ENCODE measurements at regions of chr20 and their contacts with region 1.

Region 1: GRCh38 chr20:49631061-49631788 is 63.3 kb upstream of the PTGIS start:
- DNase-seq: no peak
- H3K4me3 ChIP-seq: no peak overlapping the region
- H3K27ac ChIP-seq: peak overlapping the region; percentile 73 to 82
- H3K4me1 ChIP-seq: peaks cover 0 to 6% of the 10 kb centered on the region in 2 donors
- H3K27me3 ChIP-seq: no peaks in the 10 kb centered on the region
- CTCF ChIP-seq: no peak
- POLR2A ChIP-seq: no peak

Region 2: DNA sequence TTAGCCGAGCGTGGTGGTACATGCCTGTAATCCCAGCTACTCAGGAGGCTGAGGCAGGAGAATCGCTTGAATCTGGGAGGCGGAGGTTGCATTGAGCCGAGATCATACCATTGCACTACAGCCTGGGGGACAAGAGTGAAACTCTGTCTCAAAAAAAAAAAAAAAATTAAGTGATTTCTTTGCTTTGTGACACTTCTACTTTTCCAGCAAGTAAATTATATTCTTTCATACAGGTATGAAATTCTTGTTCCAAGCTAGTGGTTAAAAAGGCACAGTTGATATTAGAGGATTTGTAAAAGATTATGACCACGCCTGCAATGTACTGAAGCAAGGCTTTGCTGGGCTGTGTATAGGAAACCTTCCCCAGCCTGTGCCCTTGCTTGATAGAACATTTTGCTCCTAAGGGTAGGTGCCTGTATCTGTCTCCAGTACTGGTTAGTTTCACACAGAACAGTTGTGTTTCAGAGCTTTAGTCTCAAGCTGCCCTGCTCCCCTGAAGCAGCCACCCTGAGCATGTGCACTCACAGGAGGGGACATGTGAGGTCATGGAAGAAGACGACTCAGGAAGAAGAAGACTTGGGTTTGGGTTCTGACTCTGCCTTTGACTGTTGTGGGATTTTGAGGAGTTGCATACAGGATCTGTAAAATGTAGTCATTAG is 889.1 kb after region 1 on chr20:
- intact Hi-C with region 1: loop called (anchors 5 kb)
- DNase-seq: peak in 1 of 2 donors; percentile 15
- H3K4me3 ChIP-seq: no peak overlapping the region
- H3K27ac ChIP-seq: peak overlapping the region in 1 of 2 donors; percentile 10
- H3K4me1 ChIP-seq: no peaks in the 10 kb centered on the region
- H3K27me3 ChIP-seq: no peaks in the 10 kb centered on the region
- CTCF ChIP-seq: no peak
- POLR2A ChIP-seq: no peak